Aorta (tissue), 5 donors: ENCODE measurements at regions of chr3 and their contacts with region 1.

Region 1: GRCh38 chr3:194486540-194487288 is at the start of gene ATP13A3:
- DNase-seq: peak; percentile 94 to 96
- ATAC-seq: peak; percentile 93
- H3K4me3 ChIP-seq: peak within 1 kb of the TSS; percentile 89 to 95
- H3K27ac ChIP-seq: peak within 1 kb of the TSS; percentile 80 to 96
- H3K4me1 ChIP-seq: no peaks in the 10 kb centered on the region
- H3K27me3 ChIP-seq: no peaks in the 10 kb centered on the region
- total RNA-seq, gene ATP13A3: 127 to 189 TPM

Region 2: GRCh38 chr3:194536871-194537637 is 50.3 kb after region 1 on chr3:
- intact Hi-C with region 1: loop called in 1 of 2 experiments (anchors 5 kb)
- DNase-seq: peak; percentile 66 to 78
- ATAC-seq: peak; percentile 53
- H3K4me3 ChIP-seq: no peak overlapping the region
- H3K27ac ChIP-seq: peak overlapping the region; percentile 31 to 73
- H3K4me1 ChIP-seq: peaks cover 0 to 3% of the 10 kb centered on the region in 2 donors
- H3K27me3 ChIP-seq: no peaks in the 10 kb centered on the region

Region 3: DNA sequence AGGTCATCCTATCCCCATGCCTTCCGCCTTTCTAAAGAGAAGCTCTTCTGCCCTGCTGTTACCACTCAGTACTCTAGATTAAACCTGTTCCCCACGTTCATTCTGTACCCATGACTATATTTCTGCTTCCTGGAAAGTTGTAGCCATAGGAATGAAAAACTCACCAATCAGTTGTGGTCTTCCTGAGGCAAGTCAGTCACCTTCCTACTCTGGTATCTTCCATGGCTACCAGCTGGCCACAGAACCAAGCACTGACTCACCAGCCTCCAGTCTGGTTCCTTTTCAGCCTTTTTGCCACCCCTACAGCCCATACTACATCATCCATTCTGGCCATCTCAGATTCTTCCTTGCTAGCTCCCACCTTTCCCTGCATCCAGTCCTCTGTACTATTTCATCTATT is 100.1 kb after region 1 on chr3:
- intact Hi-C with region 1: loop called in 1 of 2 experiments (anchors 5 kb)
- DNase-seq: no peak
- ATAC-seq: no peak
- H3K4me3 ChIP-seq: no peak overlapping the region
- H3K27ac ChIP-seq: peak overlapping the region in 1 of 2 donors; percentile 94
- H3K4me1 ChIP-seq: no peaks in the 10 kb centered on the region
- H3K27me3 ChIP-seq: no peaks in the 10 kb centered on the region